GM10248 (cell line): ENCODE measurements at regions of chr3 and their contacts with region 1.

Region 1: GRCh38 chr3:67113802-67114407 is 115.8 kb downstream of the KBTBD8 start:
- DNase-seq: peak; percentile 56
- CTCF ChIP-seq: peak; percentile 97

Region 2: GRCh38 chr3:66989860-66990665 is 123.8 kb before region 1 on chr3:
- CTCF ChIA-PET with region 1: interaction called, 14 read pairs
- POLR2A ChIA-PET with region 1: no interaction called
- DNase-seq: peak; percentile 35
- CTCF ChIP-seq: peak; percentile 58

Region 3: GRCh38 chr3:67123914-67124313 is 10.0 kb after region 1 on chr3:
- CTCF ChIA-PET with region 1: interaction called, 16 read pairs
- POLR2A ChIA-PET with region 1: no interaction called
- DNase-seq: no peak
- CTCF ChIP-seq: no peak

Region 4: DNA sequence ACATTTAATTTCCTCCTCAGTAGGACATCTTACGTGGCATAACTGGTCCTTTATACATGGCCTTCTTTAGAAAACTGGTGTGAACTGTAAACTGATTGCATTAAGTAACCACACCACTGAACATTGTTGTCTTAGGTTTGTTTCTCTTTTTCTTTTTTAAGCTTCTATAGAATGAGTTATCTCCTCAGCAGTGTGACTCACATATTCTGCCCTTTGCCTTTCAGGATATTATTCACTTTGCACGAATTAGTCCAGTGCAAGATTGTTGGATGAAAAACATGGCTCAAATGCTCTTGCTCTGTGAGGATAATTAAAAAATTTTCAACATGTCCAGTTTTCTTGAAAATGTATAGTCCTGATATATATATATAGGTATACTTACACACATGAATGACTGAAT is 31.8 kb after region 1 on chr3:
- CTCF ChIA-PET with region 1: no interaction called
- POLR2A ChIA-PET with region 1: no interaction called
- DNase-seq: no peak
- CTCF ChIP-seq: no peak

Region 5: DNA sequence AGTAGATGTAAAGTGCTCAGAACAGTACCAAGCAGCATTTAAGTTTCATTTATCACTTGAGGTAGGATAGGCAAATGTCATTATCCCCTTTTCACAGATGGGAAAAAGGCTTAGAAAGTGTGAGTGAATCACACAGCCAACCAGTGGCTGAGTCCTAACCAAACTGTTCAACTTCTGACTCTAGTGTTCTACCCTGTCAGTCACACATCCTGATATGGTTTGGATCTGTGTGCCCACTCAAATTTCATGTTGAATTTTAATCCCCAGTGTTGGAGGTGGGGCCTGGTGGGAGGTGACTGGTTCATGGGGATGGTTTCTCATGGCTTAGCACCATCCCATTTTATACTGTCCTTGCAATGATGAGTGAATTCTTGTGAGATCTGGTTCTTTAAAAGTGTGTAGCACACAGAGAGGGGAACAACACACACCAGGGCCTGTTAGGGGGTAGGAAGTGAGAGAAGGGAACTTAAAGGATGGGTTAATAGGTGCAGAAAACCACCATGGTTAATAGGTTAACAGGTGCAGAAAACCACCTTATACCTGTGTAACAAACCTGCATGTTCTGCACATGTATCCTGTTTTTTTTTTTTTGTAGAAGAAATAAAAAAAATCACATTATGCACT is 235.8 kb after region 1 on chr3:
- CTCF ChIA-PET with region 1: no interaction called
- POLR2A ChIA-PET with region 1: no interaction called
- DNase-seq: peak; percentile 9
- CTCF ChIP-seq: no peak

Region 6: DNA sequence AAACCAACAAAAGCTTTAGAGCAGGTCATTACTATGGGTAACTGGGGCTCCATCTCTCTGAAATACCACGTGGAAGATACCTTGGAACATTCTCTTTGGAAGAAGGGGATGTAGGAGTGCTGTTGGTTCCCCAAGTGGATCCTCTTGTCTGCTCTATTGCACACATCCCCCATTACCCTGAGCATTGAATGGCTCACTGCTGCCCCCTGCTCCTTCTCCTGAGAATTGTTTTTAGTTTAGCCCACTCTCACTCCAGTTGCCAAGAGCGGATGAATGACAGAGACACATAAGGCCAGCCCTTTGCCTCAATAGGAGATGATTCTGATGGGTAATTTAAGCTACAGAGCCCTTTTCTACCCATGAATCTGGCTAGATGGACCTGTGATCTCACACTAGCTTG is 676.1 kb after region 1 on chr3:
- CTCF ChIA-PET with region 1: interaction called, 30 read pairs
- POLR2A ChIA-PET with region 1: no interaction called
- DNase-seq: peak; percentile 37
- CTCF ChIP-seq: peak; percentile 63

Region 7: GRCh38 chr3:68893600-68894239 is 1779.8 kb after region 1 on chr3:
- CTCF ChIA-PET with region 1: interaction called, 17 read pairs
- POLR2A ChIA-PET with region 1: no interaction called
- DNase-seq: peak; percentile 22
- CTCF ChIP-seq: peak; percentile 41